Pancreas (tissue), 10 donors: ENCODE measurements at regions of chr9 and their contacts with region 1.

Region 1: GRCh38 chr9:122350638-122351355 is 20.0 kb upstream of the PTGS1 start:
- DNase-seq: peak; percentile 65 to 95 (median 84)
- ATAC-seq: peak; percentile 86 to 94 (median 92)
- H3K4me3 ChIP-seq: no peak overlapping the region
- H3K27ac ChIP-seq: no peak overlapping the region
- H3K4me1 ChIP-seq: no peaks in the 10 kb centered on the region
- H3K27me3 ChIP-seq: no peaks in the 10 kb centered on the region
- CTCF ChIP-seq: peak; percentile 91 to 96 (median 94)

Region 2: DNA sequence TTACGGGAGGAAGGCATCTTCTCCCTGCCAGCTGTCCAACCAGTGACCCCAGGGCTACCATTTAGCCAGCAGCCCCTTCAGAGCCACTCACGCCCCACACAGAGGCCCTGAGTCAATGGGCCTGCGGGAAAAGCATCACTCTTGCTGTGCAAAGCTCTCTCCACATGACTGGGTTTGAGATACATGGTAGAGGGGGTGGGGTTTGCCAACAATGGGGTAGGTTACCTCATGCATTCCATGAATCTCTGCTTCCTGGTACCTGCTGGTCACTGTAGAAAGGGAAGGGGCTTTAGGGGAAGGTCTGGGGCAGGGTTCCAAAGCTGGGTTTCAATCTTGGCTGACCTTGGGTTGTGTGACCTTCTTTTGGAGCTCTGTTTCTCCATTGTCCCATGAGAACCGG is 234.8 kb before region 1 on chr9:
- intact Hi-C with region 1: loop called in 1 of 3 experiments (anchors 10 kb)
- DNase-seq: no peak
- ATAC-seq: no peak
- H3K4me3 ChIP-seq: no peak overlapping the region
- H3K27ac ChIP-seq: no peak overlapping the region
- H3K4me1 ChIP-seq: no peaks in the 10 kb centered on the region
- H3K27me3 ChIP-seq: no peaks in the 10 kb centered on the region
- CTCF ChIP-seq: no peak

Region 3: GRCh38 chr9:122125158-122125508 is 225.7 kb before region 1 on chr9:
- intact Hi-C with region 1: loop called in 2 of 3 experiments (anchors 2 to 5 kb)
- DNase-seq: peak; percentile 57 to 92 (median 83)
- ATAC-seq: peak; percentile 85 to 93 (median 91)
- H3K4me3 ChIP-seq: no peak overlapping the region
- H3K27ac ChIP-seq: no peak overlapping the region
- H3K4me1 ChIP-seq: peaks cover 0 to 5% (median 0%) of the 10 kb centered on the region in 3 donors
- H3K27me3 ChIP-seq: no peaks in the 10 kb centered on the region
- CTCF ChIP-seq: peak; percentile 79 to 92 (median 90)

Region 4: DNA sequence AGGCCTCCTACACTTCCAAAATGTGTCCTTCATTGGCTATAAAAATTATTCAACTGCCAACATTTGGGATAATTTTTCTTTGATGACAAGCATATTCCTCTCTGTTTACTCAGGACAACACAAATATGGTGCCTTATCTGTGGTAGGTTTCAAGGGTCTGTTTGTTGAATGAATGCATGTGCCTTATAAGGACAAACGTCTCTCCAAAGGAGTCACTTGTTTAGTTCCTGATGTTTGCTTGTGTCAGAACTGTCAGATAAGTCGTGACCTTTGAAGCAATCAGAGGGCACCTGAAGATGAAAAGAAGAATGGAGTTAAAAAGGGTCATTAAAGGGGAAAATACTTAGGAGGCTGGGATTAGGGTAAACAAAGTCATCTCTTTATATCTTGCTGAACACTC is 156.2 kb after region 1 on chr9:
- intact Hi-C with region 1: no loop called
- DNase-seq: no peak
- ATAC-seq: no peak
- H3K4me3 ChIP-seq: no peak overlapping the region
- H3K27ac ChIP-seq: no peak overlapping the region
- H3K4me1 ChIP-seq: no peaks in the 10 kb centered on the region
- H3K27me3 ChIP-seq: no peaks in the 10 kb centered on the region
- CTCF ChIP-seq: no peak